Naive thymus-derived CD8-positive, alpha-beta T cell (primary cell): ENCODE measurements at regions of chr6 and their contacts with region 1.

Region 1: DNA sequence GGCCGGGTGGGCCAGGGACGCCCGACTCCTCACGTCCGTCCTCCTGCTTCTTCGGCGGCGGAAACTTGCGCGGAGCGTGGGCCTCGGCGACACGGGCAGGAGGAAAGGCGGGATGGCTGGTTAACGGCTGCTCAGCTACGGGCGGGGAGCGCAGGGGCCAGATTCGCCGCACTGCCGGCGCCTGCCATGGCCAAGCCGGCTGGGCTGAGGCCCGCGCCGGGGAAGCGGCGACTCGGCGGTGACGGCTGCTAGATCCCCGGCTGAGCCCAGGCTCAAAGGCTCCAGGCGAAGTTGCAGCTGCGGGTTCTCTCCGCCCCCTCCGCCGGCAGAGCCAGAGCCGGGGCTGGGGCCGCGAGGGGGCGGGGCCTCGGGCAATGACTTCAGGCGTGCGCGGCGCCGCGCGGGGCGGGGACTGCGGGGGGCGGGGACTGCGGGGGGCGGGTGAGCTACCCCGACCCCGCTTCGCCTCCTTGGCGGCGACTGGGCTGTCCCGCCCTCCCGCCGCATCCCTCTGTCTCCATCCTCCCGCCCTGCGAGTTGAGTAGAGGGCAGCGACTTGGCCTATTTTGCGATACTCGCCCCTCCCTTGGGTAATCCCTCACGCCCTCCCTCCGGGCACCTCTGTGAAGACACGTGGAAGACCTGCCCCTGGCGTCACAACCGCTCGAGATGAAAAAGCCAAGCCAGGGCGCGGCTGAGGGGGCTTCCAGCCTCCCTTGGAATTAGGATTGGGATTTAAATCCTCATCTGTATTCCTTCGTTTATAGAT is at the start of gene CEP85L:
- DNase-seq: peak; percentile 81 to 96 (median 90)
- ATAC-seq: peak; percentile 88 to 91
- H3K4me3 Mint-ChIP-seq: peak within 1 kb of the TSS; percentile 90 to 96 (median 94)
- H3K27ac Mint-ChIP-seq: peak within 1 kb of the TSS; percentile 88 to 98 (median 96)
- H3K4me1 Mint-ChIP-seq: peaks cover 24 to 58% (median 51%) of the 10 kb centered on the region in 4 donors
- H3K27me3 Mint-ChIP-seq: no peaks in the 10 kb centered on the region
- polyA plus RNA-seq, gene CEP85L: 31.1 to 50.0 (median 47.5) TPM

Region 2: DNA sequence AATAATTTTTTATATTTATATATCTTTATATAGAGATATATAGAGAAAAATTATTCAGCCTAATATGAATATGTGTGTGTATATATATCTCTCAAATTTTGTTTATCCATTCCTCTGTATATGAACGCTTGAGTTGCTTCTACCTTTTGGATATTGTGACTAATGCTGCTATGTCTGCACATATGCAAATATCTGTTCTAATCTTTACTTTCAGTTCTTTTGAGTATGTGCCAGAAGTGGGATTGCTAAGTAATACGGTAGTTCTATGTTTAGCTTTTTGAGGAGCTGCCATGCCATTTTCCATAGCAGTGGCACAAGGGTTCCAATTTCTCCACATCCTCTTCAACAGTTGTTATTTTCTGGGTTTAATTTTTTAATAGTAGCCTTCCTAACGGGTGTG is 72.7 kb after region 1 on chr6:
- POLR2A ChIA-PET with region 1: interaction called, 10 read pairs
- DNase-seq: no peak
- ATAC-seq: peak in 1 of 2 donors; percentile 31
- H3K4me3 Mint-ChIP-seq: peak overlapping the region in 8 of 10 donors; percentile 17 to 74 (median 60)
- H3K27ac Mint-ChIP-seq: peak overlapping the region in 9 of 10 donors; percentile 16 to 97 (median 85)
- H3K4me1 Mint-ChIP-seq: peaks cover 51 to 85% (median 79%) of the 10 kb centered on the region in 4 donors
- H3K27me3 Mint-ChIP-seq: no peaks in the 10 kb centered on the region

Region 3: DNA sequence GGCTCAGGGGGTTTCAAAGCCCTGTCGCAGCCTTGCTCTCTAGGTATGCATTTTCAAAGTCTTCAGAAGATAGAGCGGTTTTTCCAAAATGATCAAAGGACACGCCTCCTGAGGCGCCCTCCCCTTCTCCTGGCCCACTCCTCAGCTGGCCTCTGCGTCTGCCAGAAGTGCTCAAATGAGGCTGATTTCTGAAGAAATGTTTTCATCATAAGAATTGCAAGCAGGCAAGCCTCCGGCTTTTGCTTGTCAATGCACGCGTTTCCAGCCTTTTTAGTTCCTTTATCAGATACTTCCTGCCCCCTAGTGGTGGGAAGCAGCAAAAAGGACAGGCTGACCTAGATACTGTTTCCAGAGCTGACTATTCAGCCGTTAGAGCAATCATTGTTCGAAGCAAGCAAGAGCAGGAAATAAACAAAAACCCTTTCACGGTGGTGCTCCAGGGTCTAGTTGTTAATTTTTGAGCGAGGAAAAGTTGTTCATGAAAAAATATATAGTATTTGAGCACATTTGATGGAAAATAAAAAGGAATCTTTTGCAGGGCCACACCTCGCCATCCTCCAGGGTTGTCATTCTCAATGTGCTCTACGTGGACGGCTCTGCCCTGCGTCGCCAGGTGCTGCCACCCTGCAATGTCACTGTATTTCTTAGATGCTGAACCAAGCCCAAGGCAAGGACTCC is 149.1 kb after region 1 on chr6:
- POLR2A ChIA-PET with region 1: interaction called, 11 read pairs
- DNase-seq: peak; percentile 51 to 93 (median 84)
- ATAC-seq: peak; percentile 90 to 94
- H3K4me3 Mint-ChIP-seq: peak overlapping the region; percentile 30 to 83 (median 66)
- H3K27ac Mint-ChIP-seq: peak overlapping the region; percentile 82 to 95 (median 90)
- H3K4me1 Mint-ChIP-seq: peaks cover 15 to 44% (median 41%) of the 10 kb centered on the region in 4 donors
- H3K27me3 Mint-ChIP-seq: no peaks in the 10 kb centered on the region

Region 4: DNA sequence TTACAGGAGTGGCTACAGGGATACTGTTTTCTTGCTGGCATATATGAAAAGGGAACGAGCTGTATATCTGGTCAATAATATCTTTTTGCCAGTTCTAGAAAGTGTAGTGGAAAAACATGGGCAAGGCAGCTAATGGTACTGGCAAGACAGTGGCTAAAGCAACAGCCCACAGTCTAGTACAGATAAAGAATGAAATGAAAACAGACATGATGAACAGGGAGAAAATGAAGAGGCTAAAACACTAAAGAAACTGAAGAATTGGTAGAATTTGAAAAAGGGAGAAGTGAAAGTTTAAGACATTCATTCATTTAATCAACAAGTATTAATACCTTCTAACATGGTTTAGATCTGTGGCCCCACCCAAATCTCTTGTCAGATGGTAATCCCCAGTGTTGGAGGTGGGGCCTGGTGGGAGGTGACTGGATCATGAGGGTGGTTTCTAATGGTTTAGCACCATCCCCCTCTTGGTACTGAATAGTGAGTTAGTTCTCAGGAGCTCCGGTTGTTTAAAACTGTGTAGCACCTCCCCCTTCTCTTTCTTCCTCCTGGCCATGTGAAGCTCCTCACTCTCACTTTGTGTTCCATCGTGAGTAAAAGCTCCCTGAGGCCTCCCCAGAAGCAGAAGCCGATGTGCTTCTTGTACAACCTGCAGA is 408.9 kb after region 1 on chr6:
- POLR2A ChIA-PET with region 1: no interaction called
- DNase-seq: no peak
- ATAC-seq: no peak
- H3K4me3 Mint-ChIP-seq: no peak overlapping the region
- H3K27ac Mint-ChIP-seq: no peak overlapping the region
- H3K4me1 Mint-ChIP-seq: peaks cover 0 to 2% (median 2%) of the 10 kb centered on the region in 4 donors
- H3K27me3 Mint-ChIP-seq: no peaks in the 10 kb centered on the region